Activated CD4-positive, alpha-beta T cell treated with anti-CD3 and anti-CD28 coated beads, Interleukin-2, amount 10 ng/mL, durations not matched to agents 7 days and 5 days (primary cell): ENCODE measurements at regions of chr12 and their contacts with region 1.

Region 1: GRCh38 chr12:45268672-45269411 is 52.9 kb downstream of the ANO6 start:
- DNase-seq: no peak
- H3K4me3 Mint-ChIP-seq: no peak overlapping the region
- H3K27ac Mint-ChIP-seq: no peak overlapping the region
- H3K4me1 Mint-ChIP-seq: peaks cover 5% of the 10 kb centered on the region
- H3K27me3 Mint-ChIP-seq: no peaks in the 10 kb centered on the region

Region 2: DNA sequence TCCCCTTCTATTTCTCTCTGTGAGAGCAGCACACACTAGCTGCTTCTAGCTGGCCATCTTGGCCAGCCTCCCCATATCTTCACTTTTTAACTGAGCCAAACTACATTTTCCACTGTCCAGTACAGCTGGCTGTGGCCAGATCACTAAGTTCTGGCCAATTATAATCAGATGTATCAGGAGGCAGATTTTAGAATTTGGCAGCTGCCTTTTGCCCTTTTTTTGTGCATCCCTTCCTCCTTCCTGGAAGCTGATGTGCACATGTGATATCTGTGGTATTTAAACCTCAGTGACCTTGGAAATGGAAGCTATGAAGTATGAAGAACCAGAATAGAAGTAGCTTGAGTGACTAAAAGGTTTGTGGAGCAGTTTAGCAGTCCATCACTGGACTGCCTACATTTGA is 102.8 kb before region 1 on chr12:
- CTCF ChIA-PET with region 1: no interaction called
- POLR2A ChIA-PET with region 1: interaction called, 11 read pairs
- DNase-seq: no peak
- H3K4me3 Mint-ChIP-seq: no peak overlapping the region
- H3K27ac Mint-ChIP-seq: no peak overlapping the region
- H3K4me1 Mint-ChIP-seq: no peaks in the 10 kb centered on the region
- H3K27me3 Mint-ChIP-seq: peaks cover 16% of the 10 kb centered on the region